Cardiac septum (tissue), 1 donor: ENCODE measurements at regions of chr15 and their contacts with region 1.

Region 1: GRCh38 chr15:92665100-92665555 is 9.6 kb upstream of the FAM174B start:
- DNase-seq: no peak

Region 2: GRCh38 chr15:92617549-92618520 is 47.3 kb before region 1 on chr15:
- intact Hi-C with region 1: loop called (anchors 5 kb)
- DNase-seq: peak; percentile 83

Region 3: GRCh38 chr15:92714477-92715401 is 49.6 kb after region 1 on chr15:
- intact Hi-C with region 1: loop called (anchors 5 kb)
- DNase-seq: peak; percentile 79

Region 4: DNA sequence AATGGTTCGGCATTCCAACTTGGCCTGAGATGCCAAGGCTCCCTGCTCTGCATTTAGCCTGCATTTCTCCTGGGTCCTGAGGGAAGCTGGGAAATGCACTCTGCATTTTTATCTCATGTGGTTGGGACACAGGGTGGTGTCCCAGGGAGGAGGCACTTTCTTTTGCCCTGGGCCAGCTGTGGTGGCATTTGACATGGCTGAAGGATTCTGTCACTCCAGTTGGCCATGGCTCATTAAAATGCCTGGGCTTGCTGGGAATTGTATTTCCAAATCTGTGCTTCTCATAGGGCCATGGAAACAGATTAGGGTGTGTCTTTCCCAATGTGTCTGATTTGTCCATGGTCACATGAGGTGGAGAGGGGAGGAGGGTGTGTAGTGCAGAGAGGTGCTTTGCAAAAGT is 552.2 kb after region 1 on chr15:
- intact Hi-C with region 1: no loop called
- DNase-seq: peak; percentile 82